PC-9 (cell line): ENCODE measurements at regions of chr10 and their contacts with region 1.

Region 1: GRCh38 chr10:9209105-9209798 is 1154.8 kb downstream of the GATA3 start:
- DNase-seq: peak; percentile 61 to 69
- H3K4me3 ChIP-seq: no peak overlapping the region
- H3K27ac ChIP-seq: no peak overlapping the region
- H3K4me1 ChIP-seq: no peaks in the 10 kb centered on the region
- H3K27me3 ChIP-seq: no peaks in the 10 kb centered on the region
- CTCF ChIP-seq: peak; percentile 87

Region 2: GRCh38 chr10:7525314-7526016 is 1683.8 kb before region 1 on chr10:
- CTCF ChIA-PET with region 1: interaction called, 3 read pairs
- POLR2A ChIA-PET with region 1: no interaction called
- intact Hi-C with region 1: loop called (anchors 5 kb)
- DNase-seq: peak; percentile 42 to 49
- H3K4me3 ChIP-seq: no peak overlapping the region
- H3K27ac ChIP-seq: no peak overlapping the region
- H3K4me1 ChIP-seq: no peaks in the 10 kb centered on the region
- H3K27me3 ChIP-seq: peaks cover 16% of the 10 kb centered on the region
- CTCF ChIP-seq: peak; percentile 78

Region 3: GRCh38 chr10:7872041-7872442 is 1337.2 kb before region 1 on chr10:
- CTCF ChIA-PET with region 1: interaction called, 3 read pairs
- POLR2A ChIA-PET with region 1: no interaction called
- intact Hi-C with region 1: loop called (anchors 1 kb)
- DNase-seq: peak in 1 of 2 experiments; percentile 5
- H3K4me3 ChIP-seq: peak overlapping the region; percentile 54; the same call in 1 of the 2 replicates
- H3K27ac ChIP-seq: no peak overlapping the region
- H3K4me1 ChIP-seq: peaks cover 8% of the 10 kb centered on the region
- H3K27me3 ChIP-seq: no peaks in the 10 kb centered on the region
- CTCF ChIP-seq: peak; percentile 74

Region 4: DNA sequence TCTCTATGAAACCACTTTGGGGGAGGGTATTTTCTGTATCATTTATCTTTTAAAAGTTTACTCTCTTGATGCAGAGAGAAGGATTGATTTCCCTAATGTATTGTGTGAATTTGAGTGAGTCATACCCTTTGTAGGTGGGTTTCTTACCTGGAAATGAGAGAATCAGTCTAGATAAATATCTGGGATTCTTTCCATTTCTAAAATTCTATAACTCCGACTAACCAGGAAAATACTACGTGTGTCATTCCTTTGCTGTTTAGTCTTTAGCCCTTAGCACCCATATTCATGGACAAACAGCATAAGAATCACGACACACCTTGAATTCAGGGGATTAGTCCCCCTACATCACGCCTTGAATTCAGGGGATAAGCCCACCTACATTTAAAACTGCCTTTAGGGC is 1015.7 kb before region 1 on chr10:
- CTCF ChIA-PET with region 1: no interaction called
- POLR2A ChIA-PET with region 1: no interaction called
- intact Hi-C with region 1: loop called (anchors 2 kb)
- DNase-seq: peak; percentile 37 to 93
- H3K4me3 ChIP-seq: peak overlapping the region; percentile 52; the same call in 1 of the 2 replicates
- H3K27ac ChIP-seq: peak overlapping the region; percentile 99
- H3K4me1 ChIP-seq: peaks cover 32% of the 10 kb centered on the region
- H3K27me3 ChIP-seq: no peaks in the 10 kb centered on the region
- CTCF ChIP-seq: no peak

Region 5: DNA sequence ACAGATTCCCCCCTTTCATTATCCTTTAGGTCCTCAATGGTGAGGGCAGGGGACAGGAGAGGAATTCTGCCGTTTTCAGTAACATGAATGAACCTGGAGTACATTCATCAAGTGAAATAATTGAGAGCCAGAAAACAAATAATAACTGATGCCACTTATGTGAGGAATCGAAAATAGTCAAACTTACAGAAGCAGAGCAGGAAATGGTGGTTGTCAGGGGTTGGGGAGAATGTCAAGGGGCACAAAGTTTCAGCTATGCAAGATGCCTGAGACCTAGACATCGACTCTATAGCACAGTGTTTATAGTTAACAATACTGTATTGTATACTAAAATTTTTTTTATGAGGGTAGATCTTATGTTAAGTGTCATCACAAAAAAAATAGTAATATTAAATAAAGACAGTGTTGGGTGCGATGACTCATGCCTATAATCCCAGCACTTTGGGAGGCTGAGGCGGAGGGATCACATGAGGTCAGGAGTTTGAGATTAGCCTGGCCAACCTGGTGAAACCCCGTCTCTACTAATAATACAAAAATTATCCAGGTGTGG is 65.0 kb after region 1 on chr10:
- CTCF ChIA-PET with region 1: no interaction called
- POLR2A ChIA-PET with region 1: no interaction called
- intact Hi-C with region 1: no loop called
- DNase-seq: no peak
- H3K4me3 ChIP-seq: no peak overlapping the region
- H3K27ac ChIP-seq: no peak overlapping the region
- H3K4me1 ChIP-seq: no peaks in the 10 kb centered on the region
- H3K27me3 ChIP-seq: no peaks in the 10 kb centered on the region
- CTCF ChIP-seq: no peak

Region 6: DNA sequence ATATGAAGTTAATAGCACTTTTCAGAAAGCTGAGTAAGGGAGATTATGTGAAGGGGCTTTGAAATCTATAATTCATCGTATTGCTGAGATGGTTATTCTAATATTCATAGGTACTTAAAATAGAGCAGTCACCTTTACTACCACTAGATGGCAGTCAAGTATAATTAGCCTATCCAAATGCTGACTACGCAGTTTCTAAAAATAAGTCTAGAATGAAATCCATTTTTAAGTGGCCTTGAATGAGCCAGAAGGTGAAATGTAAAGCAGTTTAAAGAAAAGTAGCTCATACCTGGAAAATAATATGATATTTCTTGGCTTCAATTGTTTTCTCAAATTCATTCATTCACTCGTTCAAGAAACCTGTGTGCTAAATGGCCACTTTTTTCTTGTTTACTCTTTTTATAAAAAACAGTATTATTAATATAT is 122.3 kb after region 1 on chr10:
- CTCF ChIA-PET with region 1: no interaction called
- POLR2A ChIA-PET with region 1: no interaction called
- intact Hi-C with region 1: no loop called
- DNase-seq: no peak
- H3K4me3 ChIP-seq: no peak overlapping the region
- H3K27ac ChIP-seq: no peak overlapping the region
- H3K4me1 ChIP-seq: no peaks in the 10 kb centered on the region
- H3K27me3 ChIP-seq: peaks cover 13% of the 10 kb centered on the region; the same call in 1 of the 2 replicates
- CTCF ChIP-seq: peak; percentile 82